ENCODE measurements at regions of chr3 and their contacts with region 1.

Region 1: GRCh38 chr3:170418422-170419398 is at the start of gene CLDN11:
- DNase-seq: no peak
- H3K4me3 ChIP-seq: peak within 1 kb of the TSS; percentile 26 to 67 (median 46)
- H3K27ac ChIP-seq: peak within 1 kb of the TSS; percentile 39 to 87 (median 70)
- H3K4me1 ChIP-seq: peaks cover 3 to 31% (median 7%) of the 10 kb centered on the region in 3 donors
- H3K27me3 ChIP-seq: peaks cover 0 to 53% (median 4%) of the 10 kb centered on the region in 4 donors
- CTCF ChIP-seq: no peak
- POLR2A ChIP-seq: peak in 2 of 4 donors; percentile 11 to 45
- total RNA-seq, gene CLDN11: 0.57 to 5.5 (median 1.7) TPM

Region 2: DNA sequence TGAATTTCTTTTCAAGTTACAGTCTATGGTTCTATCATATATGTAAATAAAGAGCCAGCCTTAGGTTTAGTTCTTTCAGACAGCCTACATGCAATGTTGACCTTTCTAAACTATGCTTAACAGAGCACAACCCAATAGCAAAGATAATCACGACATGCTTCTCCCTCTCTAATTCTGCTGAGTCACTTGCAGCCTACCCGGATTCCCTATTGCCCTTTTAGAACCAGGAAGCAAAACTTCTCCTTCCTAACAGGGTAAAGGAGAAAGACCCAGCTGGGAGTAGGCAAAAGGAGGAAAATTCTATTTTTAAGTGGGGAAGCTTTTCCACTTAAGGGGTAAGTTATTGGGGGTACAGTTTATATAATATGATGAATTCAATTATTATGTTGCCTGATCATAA is 87.8 kb after region 1 on chr3:
- intact Hi-C with region 1: no loop called
- DNase-seq: no peak
- H3K4me3 ChIP-seq: no peak overlapping the region
- H3K27ac ChIP-seq: no peak overlapping the region
- H3K4me1 ChIP-seq: peaks cover 0 to 3% (median 0%) of the 10 kb centered on the region in 3 donors
- H3K27me3 ChIP-seq: no peaks in the 10 kb centered on the region
- CTCF ChIP-seq: no peak
- POLR2A ChIP-seq: no peak

Region 3: DNA sequence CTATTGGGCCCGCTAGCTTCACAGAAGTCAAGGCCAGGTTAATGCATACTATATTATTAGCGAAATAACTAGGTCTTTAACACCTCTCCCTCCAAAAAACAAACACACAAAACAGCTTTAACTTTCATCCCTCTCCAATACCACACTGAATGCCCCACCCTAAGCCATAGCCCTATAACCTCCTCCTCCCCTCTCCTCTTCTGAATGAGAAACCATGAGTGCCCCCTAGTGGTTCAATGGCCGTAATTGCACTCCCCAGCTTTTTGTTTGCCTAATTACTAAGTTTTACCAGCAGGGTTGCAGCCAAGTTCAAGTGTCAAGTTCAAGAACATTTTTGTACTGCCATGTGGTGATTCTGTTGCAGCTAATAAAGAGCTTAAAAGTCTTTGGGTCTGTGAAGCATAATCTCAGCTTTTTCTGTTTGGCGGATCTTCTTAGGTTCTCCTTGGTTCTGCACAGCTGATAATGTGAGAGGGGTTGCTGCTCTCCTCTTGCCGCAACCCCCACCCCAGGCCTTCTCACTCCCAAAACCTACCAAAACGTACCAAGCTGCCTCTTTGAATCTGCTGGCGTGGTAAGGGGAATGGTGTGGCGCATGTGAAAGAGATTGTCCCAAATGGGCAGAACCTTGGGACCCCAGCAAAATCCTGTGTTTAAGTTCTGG is 393.4 kb after region 1 on chr3:
- intact Hi-C with region 1: loop called (anchors 5 kb)
- DNase-seq: no peak
- H3K4me3 ChIP-seq: no peak overlapping the region
- H3K27ac ChIP-seq: peak overlapping the region in 1 of 4 donors; percentile 31
- H3K4me1 ChIP-seq: peaks cover 0 to 23% (median 0%) of the 10 kb centered on the region in 3 donors
- H3K27me3 ChIP-seq: no peaks in the 10 kb centered on the region
- CTCF ChIP-seq: peak; percentile 85 to 96 (median 91)
- POLR2A ChIP-seq: no peak